ENCODE measurements at regions of chr3 and their contacts with region 1.

Region 1: GRCh38 chr3:189841473-189842210 is 210.5 kb downstream of the TP63 start:
- DNase-seq: peak; percentile 94
- H3K4me3 Mint-ChIP-seq: peak overlapping the region; percentile 57
- H3K27ac Mint-ChIP-seq: peak overlapping the region; percentile 99
- H3K4me1 Mint-ChIP-seq: peaks cover 58% of the 10 kb centered on the region
- H3K27me3 Mint-ChIP-seq: no peaks in the 10 kb centered on the region
- CTCF ChIP-seq: no peak

Region 2: GRCh38 chr3:189304446-189305351 is 536.9 kb before region 1 on chr3:
- CTCF ChIA-PET with region 1: interaction called, 3 read pairs
- POLR2A ChIA-PET with region 1: interaction called, 10 read pairs
- intact Hi-C with region 1: no loop called
- DNase-seq: peak; percentile 96
- H3K4me3 Mint-ChIP-seq: peak overlapping the region; percentile 65
- H3K27ac Mint-ChIP-seq: peak overlapping the region; percentile 99
- H3K4me1 Mint-ChIP-seq: peaks cover 59% of the 10 kb centered on the region
- H3K27me3 Mint-ChIP-seq: no peaks in the 10 kb centered on the region
- CTCF ChIP-seq: no peak

Region 3: DNA sequence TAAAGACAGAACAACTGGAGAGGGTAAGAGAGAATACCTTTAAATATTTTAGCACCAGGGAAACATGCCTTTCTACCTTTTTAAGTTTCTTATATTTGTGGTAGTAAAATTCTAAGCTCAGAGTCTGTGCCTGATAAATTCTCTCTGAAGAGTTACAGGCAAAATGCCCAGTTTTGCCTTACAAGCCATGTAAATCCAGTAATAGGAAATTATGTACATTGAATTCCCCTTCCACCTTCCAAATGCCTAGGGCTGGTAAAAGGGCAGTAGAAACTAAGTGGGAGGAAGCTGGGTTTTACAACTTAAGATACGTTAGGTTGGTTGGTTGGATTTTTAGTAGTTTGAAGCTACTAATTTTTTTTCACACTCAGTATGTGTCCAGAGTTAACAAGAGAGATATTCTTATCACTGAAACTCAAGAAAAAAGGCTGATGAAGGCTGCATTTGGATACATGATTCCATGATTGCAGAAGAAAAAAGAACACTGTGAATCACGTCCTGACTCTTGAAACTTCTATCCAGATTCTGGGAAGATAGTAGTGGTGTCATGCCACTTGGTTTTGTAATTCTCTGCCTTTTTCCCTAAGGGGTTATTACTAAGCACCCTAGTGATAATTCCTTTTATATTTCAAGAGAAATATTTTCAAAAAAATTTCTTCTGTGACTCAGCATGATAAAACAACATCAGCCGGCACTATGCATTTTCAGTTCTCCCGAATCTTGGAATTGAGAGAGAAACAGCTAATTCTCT is 253.4 kb before region 1 on chr3:
- CTCF ChIA-PET with region 1: no interaction called
- POLR2A ChIA-PET with region 1: interaction called, 10 read pairs
- intact Hi-C with region 1: no loop called
- DNase-seq: peak; percentile 92
- H3K4me3 Mint-ChIP-seq: peak overlapping the region; percentile 60
- H3K27ac Mint-ChIP-seq: peak overlapping the region; percentile 84
- H3K4me1 Mint-ChIP-seq: peaks cover 48% of the 10 kb centered on the region
- H3K27me3 Mint-ChIP-seq: no peaks in the 10 kb centered on the region
- CTCF ChIP-seq: no peak

Region 4: DNA sequence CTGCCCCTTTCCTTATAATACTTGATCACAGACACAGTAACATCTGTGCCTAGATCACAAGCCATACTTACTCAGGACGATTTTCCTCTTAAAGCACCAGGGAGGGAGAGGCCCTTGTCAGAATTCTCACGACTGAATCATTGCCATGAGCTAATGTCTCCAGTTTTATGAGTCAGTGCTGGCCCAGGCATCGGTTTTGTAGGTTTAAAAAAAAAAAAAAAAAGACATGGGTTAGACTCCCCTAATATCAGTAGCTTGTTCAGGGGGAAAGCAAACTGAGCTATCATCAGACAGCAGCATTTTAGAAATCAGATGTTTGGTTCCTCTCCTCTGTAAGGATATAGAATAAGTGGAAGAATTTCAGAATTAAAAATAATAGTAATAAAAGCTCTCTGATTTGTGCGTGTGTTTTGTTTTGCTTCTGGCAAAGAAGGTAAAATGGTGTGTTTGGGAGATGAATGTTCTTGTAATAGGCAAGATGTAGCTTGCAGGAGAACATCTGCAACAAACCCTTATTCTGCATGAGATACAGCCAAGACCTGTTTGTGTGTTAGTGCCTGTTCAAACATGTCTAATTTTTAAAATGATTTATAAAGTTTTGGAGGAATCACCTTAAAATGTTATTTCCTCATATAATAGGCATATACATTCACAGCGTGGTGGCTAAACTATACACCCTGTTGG is 16.9 kb before region 1 on chr3:
- CTCF ChIA-PET with region 1: interaction called, 12 read pairs
- POLR2A ChIA-PET with region 1: interaction called, 166 read pairs
- intact Hi-C with region 1: no loop called
- DNase-seq: peak; percentile 96
- H3K4me3 Mint-ChIP-seq: peak overlapping the region; percentile 42
- H3K27ac Mint-ChIP-seq: peak overlapping the region; percentile 83
- H3K4me1 Mint-ChIP-seq: peaks cover 31% of the 10 kb centered on the region
- H3K27me3 Mint-ChIP-seq: no peaks in the 10 kb centered on the region
- CTCF ChIP-seq: no peak

Region 5: DNA sequence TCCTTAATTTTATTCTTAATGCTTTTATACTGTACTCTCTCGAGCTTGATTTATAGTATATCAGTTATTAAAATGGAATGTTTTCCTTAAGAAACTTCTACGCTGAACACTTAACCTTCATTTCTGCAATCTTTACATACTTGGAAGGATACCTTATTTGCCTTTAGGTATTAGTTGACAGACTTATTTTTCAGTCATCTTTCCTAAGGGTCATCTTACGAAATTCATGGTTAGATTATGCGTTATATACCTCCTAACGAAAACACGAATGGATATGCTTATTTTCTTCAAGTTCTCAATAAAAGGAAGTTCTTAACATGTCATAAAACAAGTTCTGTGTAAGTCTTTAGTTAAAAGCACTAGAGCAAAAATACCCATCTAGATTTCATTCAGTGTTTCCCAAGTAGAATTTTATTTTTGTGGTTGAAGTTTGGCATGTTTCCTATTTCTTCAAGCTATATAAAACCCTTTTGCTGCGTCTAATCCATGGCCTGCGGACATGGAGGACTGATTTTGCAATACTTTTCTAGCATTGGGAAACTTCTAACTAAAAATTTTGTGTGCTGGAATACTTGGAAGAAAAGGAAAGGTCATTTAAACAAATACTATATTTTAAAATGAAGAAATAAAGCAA is 20.9 kb after region 1 on chr3:
- CTCF ChIA-PET with region 1: interaction called, 3 read pairs
- POLR2A ChIA-PET with region 1: interaction called, 109 read pairs
- intact Hi-C with region 1: loop called (anchors 2 kb)
- DNase-seq: peak; percentile 95
- H3K4me3 Mint-ChIP-seq: peak overlapping the region; percentile 35
- H3K27ac Mint-ChIP-seq: peak overlapping the region; percentile 96
- H3K4me1 Mint-ChIP-seq: peaks cover 21% of the 10 kb centered on the region
- H3K27me3 Mint-ChIP-seq: no peaks in the 10 kb centered on the region
- CTCF ChIP-seq: no peak

Region 6: GRCh38 chr3:189914799-189915198 is 73.2 kb after region 1 on chr3:
- CTCF ChIA-PET with region 1: interaction called, 5 read pairs
- POLR2A ChIA-PET with region 1: interaction called, 35 read pairs
- intact Hi-C with region 1: loop called (anchors 2 kb)
- DNase-seq: peak; percentile 96
- H3K4me3 Mint-ChIP-seq: no peak overlapping the region
- H3K27ac Mint-ChIP-seq: peak overlapping the region; percentile 59
- H3K4me1 Mint-ChIP-seq: peaks cover 37% of the 10 kb centered on the region
- H3K27me3 Mint-ChIP-seq: no peaks in the 10 kb centered on the region
- CTCF ChIP-seq: no peak

Region 7: GRCh38 chr3:189947948-189948723 is 106.5 kb after region 1 on chr3:
- CTCF ChIA-PET with region 1: interaction called, 8 read pairs
- POLR2A ChIA-PET with region 1: interaction called, 13 read pairs
- intact Hi-C with region 1: no loop called
- DNase-seq: peak; percentile 73
- H3K4me3 Mint-ChIP-seq: no peak overlapping the region
- H3K27ac Mint-ChIP-seq: peak overlapping the region; percentile 74
- H3K4me1 Mint-ChIP-seq: peaks cover 26% of the 10 kb centered on the region
- H3K27me3 Mint-ChIP-seq: no peaks in the 10 kb centered on the region
- CTCF ChIP-seq: peak; percentile 76

Region 8: DNA sequence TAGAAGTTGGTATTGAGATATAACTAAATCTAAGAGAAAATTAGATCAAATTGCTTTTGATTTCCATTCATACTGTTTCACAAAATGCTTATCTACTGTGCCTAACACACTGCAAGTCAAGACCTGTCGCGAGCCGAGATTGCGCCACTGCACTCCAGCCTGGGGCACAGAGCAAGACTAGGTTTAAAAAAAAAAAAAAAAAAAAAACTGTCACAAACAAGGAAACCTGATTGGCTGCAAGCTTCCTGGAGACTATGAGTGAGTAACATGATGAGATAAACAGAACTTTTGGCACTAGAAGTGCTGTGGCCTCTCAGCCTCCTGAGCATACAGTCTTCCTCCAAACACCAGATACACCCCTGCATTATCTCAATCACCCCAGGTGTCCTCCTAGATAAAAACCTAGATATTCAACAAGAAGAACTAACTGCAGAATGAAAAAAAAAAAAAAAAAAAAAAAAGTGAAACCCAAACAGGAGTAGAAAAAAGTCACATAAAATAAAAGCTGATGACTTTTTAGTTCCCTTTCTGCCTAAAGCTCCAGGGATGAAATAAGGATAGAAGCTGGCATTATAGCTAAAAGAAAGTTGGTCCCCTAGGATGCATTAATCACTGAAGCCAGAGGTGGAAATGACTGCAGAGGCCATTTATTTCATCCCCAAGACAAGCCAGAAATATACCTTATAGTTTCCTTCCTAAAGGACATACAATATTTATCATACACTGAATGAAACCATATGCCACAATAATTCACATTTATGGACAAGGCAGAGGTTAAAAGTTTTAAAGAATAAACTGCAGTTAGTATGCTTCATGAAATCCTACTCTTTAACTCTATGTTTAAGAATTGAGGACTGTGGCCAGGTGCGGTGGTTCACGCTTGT is 196.7 kb after region 1 on chr3:
- CTCF ChIA-PET with region 1: no interaction called
- POLR2A ChIA-PET with region 1: no interaction called
- intact Hi-C with region 1: no loop called
- DNase-seq: peak; percentile 95
- H3K4me3 Mint-ChIP-seq: peak overlapping the region; percentile 54
- H3K27ac Mint-ChIP-seq: peak overlapping the region; percentile 69
- H3K4me1 Mint-ChIP-seq: peaks cover 30% of the 10 kb centered on the region
- H3K27me3 Mint-ChIP-seq: no peaks in the 10 kb centered on the region
- CTCF ChIP-seq: no peak

Region 9: GRCh38 chr3:190120269-190121060 is 278.8 kb after region 1 on chr3 and contains the start of gene P3H2:
- CTCF ChIA-PET with region 1: no interaction called
- POLR2A ChIA-PET with region 1: no interaction called
- intact Hi-C with region 1: no loop called
- DNase-seq: peak; percentile 91
- H3K4me3 Mint-ChIP-seq: peak within 1 kb of the TSS; percentile 95
- H3K27ac Mint-ChIP-seq: peak within 1 kb of the TSS; percentile 70
- H3K4me1 Mint-ChIP-seq: peaks cover 51% of the 10 kb centered on the region
- H3K27me3 Mint-ChIP-seq: no peaks in the 10 kb centered on the region
- CTCF ChIP-seq: peak; percentile 32
- total RNA-seq, gene P3H2: 19.8 and 60.2 TPM in 2 replicates

Region 10: GRCh38 chr3:190197346-190197763 is 355.7 kb after region 1 on chr3:
- CTCF ChIA-PET with region 1: no interaction called
- POLR2A ChIA-PET with region 1: no interaction called
- intact Hi-C with region 1: no loop called
- DNase-seq: no peak
- H3K4me3 Mint-ChIP-seq: no peak overlapping the region
- H3K27ac Mint-ChIP-seq: no peak overlapping the region
- H3K4me1 Mint-ChIP-seq: no peaks in the 10 kb centered on the region
- H3K27me3 Mint-ChIP-seq: no peaks in the 10 kb centered on the region
- CTCF ChIP-seq: no peak

Measured in MCF 10A (cell line).